Esophagus squamous epithelium (tissue), 5 donors: ENCODE measurements at regions of chr15 and their contacts with region 1.

Region 1: GRCh38 chr15:55654561-55655031 is 66.5 kb upstream of the PYGO1 start:
- DNase-seq: no peak
- H3K4me3 ChIP-seq: no peak overlapping the region
- H3K27ac ChIP-seq: no peak overlapping the region
- H3K4me1 ChIP-seq: no peaks in the 10 kb centered on the region
- H3K27me3 ChIP-seq: no peaks in the 10 kb centered on the region
- CTCF ChIP-seq: no peak
- POLR2A ChIP-seq: no peak

Region 2: DNA sequence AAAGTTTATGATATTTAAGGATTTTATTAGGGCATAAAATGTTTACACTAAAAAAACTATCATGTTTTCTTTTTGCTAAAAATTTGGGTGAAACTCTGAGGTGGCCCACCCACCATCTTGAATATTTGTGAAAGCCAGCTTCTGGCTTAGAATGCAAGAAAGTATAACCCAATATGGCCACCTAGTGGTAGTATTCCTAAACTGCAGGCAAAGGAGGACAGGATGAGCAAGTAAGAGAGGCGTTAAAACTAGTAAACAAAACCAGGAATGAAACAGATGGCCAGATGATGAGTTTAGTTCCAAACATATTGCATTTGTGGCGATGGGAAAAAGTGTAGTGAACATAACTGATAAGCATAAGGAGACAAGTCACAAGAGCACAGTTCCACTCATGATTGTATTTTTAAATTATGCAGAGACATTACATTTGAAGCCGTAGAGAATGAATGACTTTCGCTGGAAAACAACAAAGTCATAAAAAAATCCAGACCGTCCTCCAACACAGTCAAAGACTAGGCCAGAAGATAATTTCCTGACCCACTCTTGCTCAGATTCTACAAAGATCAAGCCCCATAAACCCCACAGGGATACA is 191.6 kb after region 1 on chr15:
- intact Hi-C with region 1: loop called (anchors 5 kb)
- DNase-seq: no peak
- H3K4me3 ChIP-seq: no peak overlapping the region
- H3K27ac ChIP-seq: no peak overlapping the region
- H3K4me1 ChIP-seq: no peaks in the 10 kb centered on the region
- H3K27me3 ChIP-seq: no peaks in the 10 kb centered on the region
- CTCF ChIP-seq: peak; percentile 22 to 92 (median 80)
- POLR2A ChIP-seq: no peak